A549 (cell line): ENCODE measurements at regions of chr6 and their contacts with region 1.

Region 1: DNA sequence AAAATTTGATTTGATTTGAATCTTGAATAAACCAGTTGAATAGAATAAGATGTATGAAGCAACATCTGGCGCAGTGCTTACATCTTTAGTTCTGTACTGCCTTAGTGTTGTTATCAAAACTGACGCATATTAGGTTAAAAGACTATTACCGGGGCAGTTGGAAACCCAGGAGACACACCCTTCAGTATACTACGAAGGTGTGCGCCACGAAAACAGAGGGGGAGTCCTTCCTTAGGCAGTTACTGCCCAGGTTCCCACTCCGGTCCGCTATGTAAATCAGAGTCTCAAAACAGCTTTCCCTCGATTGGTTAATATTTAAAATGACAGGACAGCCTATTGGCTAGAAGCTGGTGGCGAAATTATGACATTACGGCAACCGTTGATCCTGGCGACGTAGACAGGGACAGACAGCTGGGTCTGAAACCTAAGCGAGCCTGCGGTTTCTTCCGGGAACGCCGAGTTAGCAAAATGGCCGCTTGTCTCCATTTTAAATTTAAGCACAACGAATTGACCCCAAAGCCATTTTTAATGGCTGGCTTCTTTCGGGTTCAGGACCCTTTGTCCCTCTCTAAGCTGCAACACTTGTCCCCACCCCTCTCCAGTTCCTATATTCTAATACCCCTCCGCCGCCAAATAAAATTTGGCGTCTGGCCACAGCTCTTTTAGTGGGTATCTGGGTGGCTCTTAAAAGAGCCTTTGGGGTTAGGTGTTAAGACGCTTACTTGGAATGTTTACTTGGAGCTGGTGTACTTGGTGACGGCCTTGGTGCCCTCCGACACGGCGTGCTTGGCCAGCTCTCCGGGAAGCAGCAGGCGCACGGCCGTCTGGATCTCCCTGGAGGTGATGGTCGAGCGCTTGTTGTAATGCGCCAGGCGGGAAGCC is 35.8 kb downstream of the HFE start:
- DNase-seq: peak; percentile 77 to 99
- ATAC-seq: peak; percentile 72 to 73
- H3K4me3 ChIP-seq: peak overlapping the region; percentile 93
- H3K27ac ChIP-seq: peak overlapping the region; percentile 98
- H3K4me1 ChIP-seq: peaks cover 45% of the 10 kb centered on the region
- CTCF ChIP-seq: no peak
- EP300 ChIP-seq: peak; percentile 52 to 62; a peak in 3 of 5 replicates
- POLR2A ChIP-seq: peak; percentile 72
- RAD21 ChIP-seq: 0 out of 5 replicates have a peak, but pooled peaks of 1 of the 2 experiments have one; percentile 1

Region 2: DNA sequence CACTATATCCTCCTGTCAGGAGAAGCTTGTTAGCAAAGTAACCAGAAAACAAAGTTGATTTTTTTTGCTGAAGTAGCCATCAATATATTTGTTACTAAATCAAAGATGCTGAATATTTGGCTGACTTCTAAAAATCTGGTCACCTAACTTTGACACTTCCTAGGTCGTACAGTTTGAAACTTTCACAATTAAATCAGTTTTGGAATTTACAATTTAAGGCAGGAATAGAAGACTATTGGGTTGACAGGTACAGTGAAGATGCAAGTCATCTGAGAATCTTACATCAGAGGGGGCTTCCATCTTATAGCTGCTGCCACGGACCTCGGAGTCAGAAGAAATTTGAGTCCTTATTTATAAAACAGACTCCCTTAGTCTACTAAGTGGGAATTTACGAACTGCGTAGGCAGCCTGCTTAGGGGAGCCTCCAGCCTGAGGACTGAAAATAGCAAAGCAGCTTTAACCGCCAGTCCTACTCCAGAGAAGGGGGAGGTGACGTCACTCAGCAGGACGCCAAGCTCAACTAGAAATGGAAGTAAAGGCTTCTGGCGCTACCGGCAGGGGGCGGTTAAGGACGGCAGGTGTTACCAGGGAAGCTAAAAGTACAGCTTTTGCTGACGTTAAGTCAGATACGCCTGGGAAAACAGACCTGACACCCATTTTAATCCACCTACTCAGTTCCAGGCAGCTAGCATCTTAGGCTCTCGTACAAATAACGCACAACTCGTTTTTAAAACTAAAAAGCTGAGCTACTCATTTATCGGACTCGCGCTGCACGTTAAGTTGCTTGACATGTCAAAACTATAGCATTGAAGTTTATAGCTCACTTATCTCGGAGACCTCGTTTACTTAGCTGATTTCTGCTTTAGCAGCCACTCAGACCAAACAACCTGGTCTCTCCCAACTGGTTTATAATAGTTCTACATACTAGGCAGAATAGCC is 96.9 kb before region 1 on chr6:
- CTCF ChIA-PET with region 1: interaction called, 3 read pairs
- POLR2A ChIA-PET with region 1: interaction called, 70 read pairs
- DNase-seq: peak; percentile 45 to 95
- ATAC-seq: peak; percentile 58 to 60
- H3K4me3 ChIP-seq: peak overlapping the region; percentile 69
- H3K27ac ChIP-seq: peak overlapping the region; percentile 95 to 100
- H3K4me1 ChIP-seq: peaks cover 52% of the 10 kb centered on the region
- CTCF ChIP-seq: peak; percentile 53
- EP300 ChIP-seq: no peak
- POLR2A ChIP-seq: peak; percentile 39; the same call in 1 of the 2 replicates
- RAD21 ChIP-seq: peak in 1 of 2 experiments; percentile 30; a peak in 2 of 5 replicates

Region 3: GRCh38 chr6:26045065-26045927 is 77.7 kb before region 1 on chr6:
- CTCF ChIA-PET with region 1: no interaction called
- POLR2A ChIA-PET with region 1: interaction called, 28 read pairs
- DNase-seq: peak; percentile 55 to 86
- ATAC-seq: peak; percentile 67 to 77
- H3K4me3 ChIP-seq: peak overlapping the region; percentile 40
- H3K27ac ChIP-seq: peak overlapping the region; percentile 81 to 89
- H3K4me1 ChIP-seq: 0 out of 3 replicates have a peak, but pooled peaks cover 11% of the 10 kb centered on the region
- CTCF ChIP-seq: no peak
- EP300 ChIP-seq: no peak
- POLR2A ChIP-seq: peak; percentile 83
- RAD21 ChIP-seq: no peak

Region 4: DNA sequence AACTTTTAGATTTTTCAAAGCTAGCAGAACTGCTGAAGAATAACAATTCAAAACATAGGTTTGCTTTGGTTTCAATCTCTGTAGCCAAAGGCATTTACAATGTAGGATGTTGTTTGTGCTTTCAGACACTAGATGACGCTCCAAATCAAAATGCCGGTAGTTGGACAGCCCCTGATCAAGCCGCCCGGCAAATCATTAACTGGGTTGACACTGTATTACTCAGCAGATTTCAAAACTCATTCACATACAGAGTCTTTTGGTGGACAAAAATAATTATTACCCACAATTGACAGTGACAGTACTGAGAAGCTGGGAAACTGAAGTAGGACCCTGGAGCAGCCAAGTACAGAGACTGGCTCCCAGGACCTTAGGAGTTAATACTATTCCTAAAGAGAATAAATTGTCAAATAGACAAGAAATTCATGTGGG is 57.1 kb before region 1 on chr6:
- CTCF ChIA-PET with region 1: interaction called, 24 read pairs
- POLR2A ChIA-PET with region 1: interaction called, 7 read pairs
- DNase-seq: peak; percentile 60 to 88
- ATAC-seq: peak; percentile 90 to 92
- H3K4me3 ChIP-seq: peak overlapping the region; percentile 30
- H3K27ac ChIP-seq: peak overlapping the region; percentile 84 to 85
- H3K4me1 ChIP-seq: peaks cover 20% of the 10 kb centered on the region
- CTCF ChIP-seq: peak; percentile 89
- EP300 ChIP-seq: no peak
- POLR2A ChIP-seq: no peak
- RAD21 ChIP-seq: peak; percentile 89 to 92

Region 5: GRCh38 chr6:26172496-26172958 is 49.5 kb after region 1 on chr6:
- CTCF ChIA-PET with region 1: no interaction called
- POLR2A ChIA-PET with region 1: interaction called, 12 read pairs
- DNase-seq: no peak
- ATAC-seq: peak; percentile 61 to 64; a peak in 4 of 6 replicates
- H3K4me3 ChIP-seq: peak overlapping the region; percentile 57
- H3K27ac ChIP-seq: peak overlapping the region; percentile 85 to 89
- H3K4me1 ChIP-seq: peaks cover 16% of the 10 kb centered on the region; the same call in 2 of the 3 replicates
- CTCF ChIP-seq: no peak
- EP300 ChIP-seq: no peak
- POLR2A ChIP-seq: no peak
- RAD21 ChIP-seq: no peak

Region 6: GRCh38 chr6:26473758-26474438 is 350.9 kb after region 1 on chr6:
- CTCF ChIA-PET with region 1: no interaction called
- POLR2A ChIA-PET with region 1: no interaction called
- DNase-seq: peak; percentile 65 to 89
- ATAC-seq: peak; percentile 96 to 97
- H3K4me3 ChIP-seq: peak overlapping the region; percentile 44
- H3K27ac ChIP-seq: peak overlapping the region; percentile 77 to 90
- H3K4me1 ChIP-seq: peaks cover 24% of the 10 kb centered on the region
- CTCF ChIP-seq: no peak
- EP300 ChIP-seq: no peak
- POLR2A ChIP-seq: no peak
- RAD21 ChIP-seq: no peak